Activated CD4-positive, alpha-beta memory T cell treated with anti-CD3 and anti-CD28 coated beads for 36 hours (primary cell): ENCODE measurements at regions of chr12 and their contacts with region 1.

Region 1: DNA sequence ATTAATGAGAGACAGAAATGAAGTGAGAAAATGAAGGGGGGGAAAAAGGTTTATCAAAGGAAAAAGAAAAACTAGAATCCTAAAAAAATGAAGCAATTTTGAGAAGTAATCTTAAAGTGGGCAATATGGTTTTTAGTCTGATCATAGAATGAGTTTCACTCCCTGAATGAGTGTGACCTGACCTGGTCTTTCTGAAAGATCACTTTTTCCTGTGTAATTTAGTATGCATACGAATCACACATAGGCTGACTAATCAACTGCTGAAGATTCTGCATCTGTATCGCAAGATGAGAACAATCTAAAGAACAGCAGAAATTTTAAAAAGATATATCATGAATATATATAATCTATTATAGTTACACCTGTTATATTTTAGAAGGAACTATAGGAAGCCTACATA is 11.3 kb downstream of the GNPTAB start:
- DNase-seq: no peak
- H3K4me3 Mint-ChIP-seq: no peak overlapping the region
- H3K27ac Mint-ChIP-seq: peak overlapping the region; percentile 82
- H3K4me1 Mint-ChIP-seq: peaks cover 44% of the 10 kb centered on the region
- H3K27me3 Mint-ChIP-seq: no peaks in the 10 kb centered on the region

Region 2: DNA sequence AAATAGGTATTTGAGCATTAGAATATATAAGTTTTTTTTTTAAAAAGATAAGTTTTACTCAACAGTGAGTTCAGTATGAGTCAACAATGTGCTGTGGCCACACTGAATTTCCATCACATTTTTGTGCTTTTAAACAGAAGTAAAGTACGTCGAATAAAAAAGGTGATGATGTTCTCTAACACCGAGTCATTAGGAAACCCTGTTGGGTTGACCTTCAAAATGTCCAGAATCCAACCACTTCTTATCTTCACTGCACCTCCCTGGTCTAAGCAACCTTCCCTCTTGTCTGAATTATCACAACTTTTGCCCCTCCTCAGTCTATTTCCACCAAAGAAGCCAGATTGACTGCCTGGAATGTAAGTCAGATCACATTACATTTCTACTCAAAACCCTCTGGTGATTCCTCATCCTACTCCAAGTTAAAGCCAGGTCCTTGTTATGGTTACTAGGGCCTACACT is 37.2 kb before region 1 on chr12:
- CTCF ChIA-PET with region 1: interaction called, 4 read pairs
- POLR2A ChIA-PET with region 1: interaction called, 5 read pairs
- intact Hi-C with region 1: loop called (anchors 1 kb)
- DNase-seq: peak; percentile 22
- H3K4me3 Mint-ChIP-seq: no peak overlapping the region
- H3K27ac Mint-ChIP-seq: peak overlapping the region; percentile 18
- H3K4me1 Mint-ChIP-seq: peaks cover 22% of the 10 kb centered on the region
- H3K27me3 Mint-ChIP-seq: no peaks in the 10 kb centered on the region

Region 3: DNA sequence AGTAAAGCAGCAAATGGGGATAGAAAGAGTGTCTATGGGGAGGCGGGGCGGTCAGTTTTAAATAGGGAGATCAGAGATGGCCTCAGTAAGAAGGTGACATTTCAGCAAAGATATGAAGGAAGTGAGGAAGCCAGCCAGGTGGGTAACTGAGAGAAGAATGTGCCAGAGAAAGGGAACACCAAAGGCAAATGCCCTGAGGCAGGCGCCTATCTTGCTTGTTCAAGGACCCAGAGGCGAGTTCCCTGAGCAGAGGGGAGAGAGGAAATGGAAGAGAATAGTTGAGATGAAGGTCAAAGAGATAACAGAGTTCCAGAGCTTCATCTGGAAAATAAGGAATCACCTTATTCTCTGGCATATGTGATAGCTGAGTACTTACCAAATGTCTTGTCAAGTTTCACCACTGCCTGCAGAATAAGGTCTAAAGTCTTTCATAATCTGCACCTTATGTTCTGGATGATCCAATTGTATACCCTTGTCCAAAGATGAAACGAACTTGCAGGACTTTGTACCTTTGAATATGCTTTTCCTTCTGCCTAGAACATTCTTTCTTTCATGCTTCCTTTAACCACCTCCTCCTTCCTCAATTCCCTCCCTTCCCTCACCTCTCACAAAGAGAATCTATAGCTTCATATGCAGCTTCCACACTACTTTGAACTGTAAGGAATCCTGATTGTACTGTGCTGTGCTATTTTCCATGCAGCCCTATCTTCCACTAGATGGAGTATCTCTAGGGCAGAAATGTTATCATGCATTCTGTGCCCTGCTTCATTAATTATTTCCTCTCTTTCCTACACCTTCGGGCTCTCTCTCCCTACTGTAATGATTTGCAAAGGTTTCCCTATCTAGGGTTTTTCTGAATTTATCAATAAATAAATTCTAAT is 27.2 kb before region 1 on chr12:
- CTCF ChIA-PET with region 1: interaction called, 4 read pairs
- POLR2A ChIA-PET with region 1: interaction called, 3 read pairs
- intact Hi-C with region 1: loop called (anchors 1 kb)
- DNase-seq: no peak
- H3K4me3 Mint-ChIP-seq: no peak overlapping the region
- H3K27ac Mint-ChIP-seq: no peak overlapping the region
- H3K4me1 Mint-ChIP-seq: peaks cover 17% of the 10 kb centered on the region
- H3K27me3 Mint-ChIP-seq: no peaks in the 10 kb centered on the region

Region 4: DNA sequence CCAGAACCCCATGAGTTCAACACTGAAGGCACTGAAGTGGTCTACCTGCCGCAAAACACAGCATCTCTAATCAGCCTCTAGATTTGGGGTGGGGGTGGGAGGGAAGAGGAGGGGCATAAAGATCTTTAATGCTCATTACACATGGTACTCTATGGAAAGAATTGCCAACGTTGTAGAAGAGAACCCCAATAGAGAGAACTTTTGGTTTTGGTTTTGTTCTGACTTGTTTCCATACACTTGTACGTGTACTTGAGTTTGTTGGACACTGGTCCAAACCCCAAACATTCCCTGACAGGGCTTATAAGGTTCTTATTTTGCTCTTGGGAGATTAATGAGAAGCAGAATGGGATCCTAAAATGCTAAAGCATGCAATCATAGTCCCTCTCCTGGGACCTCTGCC is 19.7 kb before region 1 on chr12:
- CTCF ChIA-PET with region 1: interaction called, 3 read pairs
- POLR2A ChIA-PET with region 1: interaction called, 3 read pairs
- intact Hi-C with region 1: loop called (anchors 1 kb)
- DNase-seq: no peak
- H3K4me3 Mint-ChIP-seq: no peak overlapping the region
- H3K27ac Mint-ChIP-seq: no peak overlapping the region
- H3K4me1 Mint-ChIP-seq: peaks cover 15% of the 10 kb centered on the region
- H3K27me3 Mint-ChIP-seq: no peaks in the 10 kb centered on the region

Region 5: DNA sequence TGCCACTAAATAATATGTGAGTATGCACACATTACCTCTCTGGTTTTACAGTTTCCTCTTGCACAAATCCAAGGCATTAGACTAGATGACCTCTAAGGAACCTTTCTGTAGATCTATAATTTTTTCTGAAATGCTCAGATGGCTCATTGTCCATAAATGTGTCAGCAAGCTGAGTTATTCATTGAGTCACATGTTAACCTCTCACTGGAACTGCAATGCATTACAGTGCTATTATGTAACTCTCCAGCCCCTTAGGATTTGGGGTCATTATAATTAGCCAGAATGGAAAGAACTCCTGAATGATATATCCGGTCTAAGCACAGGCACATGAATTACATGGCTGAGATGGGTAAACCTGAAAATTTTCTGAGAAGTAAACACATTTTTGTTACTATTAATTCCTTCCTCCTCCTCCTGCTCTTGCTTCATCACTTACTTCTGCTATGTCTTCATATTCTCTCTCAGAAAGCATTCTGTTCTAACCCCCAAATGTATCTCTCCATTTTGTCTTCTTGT is 37.6 kb after region 1 on chr12:
- CTCF ChIA-PET with region 1: no interaction called
- POLR2A ChIA-PET with region 1: no interaction called
- intact Hi-C with region 1: loop called (anchors 1 kb)
- DNase-seq: no peak
- H3K4me3 Mint-ChIP-seq: no peak overlapping the region
- H3K27ac Mint-ChIP-seq: no peak overlapping the region
- H3K4me1 Mint-ChIP-seq: peaks cover 23% of the 10 kb centered on the region
- H3K27me3 Mint-ChIP-seq: no peaks in the 10 kb centered on the region

Region 6: DNA sequence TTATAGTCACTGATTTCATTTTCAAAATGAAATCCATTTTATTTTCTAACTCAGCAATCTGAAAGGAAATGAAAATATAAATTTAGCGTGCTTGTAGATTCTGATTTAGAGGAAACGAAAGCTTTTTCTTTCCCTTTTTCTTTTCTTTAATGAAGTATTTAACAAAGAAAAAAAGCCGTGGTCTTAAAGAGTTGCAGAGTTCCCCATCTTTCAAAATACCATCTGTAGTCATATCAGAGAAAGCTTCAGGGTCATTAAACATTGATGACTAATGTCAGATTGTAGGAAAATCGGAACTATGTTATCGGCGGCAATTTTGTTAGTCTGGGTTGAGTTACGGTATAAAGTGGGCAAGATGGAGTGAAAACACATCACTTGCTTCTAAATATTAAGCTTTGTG is 90.2 kb after region 1 on chr12:
- CTCF ChIA-PET with region 1: no interaction called
- POLR2A ChIA-PET with region 1: no interaction called
- intact Hi-C with region 1: no loop called
- DNase-seq: no peak
- H3K4me3 Mint-ChIP-seq: no peak overlapping the region
- H3K27ac Mint-ChIP-seq: no peak overlapping the region
- H3K4me1 Mint-ChIP-seq: no peaks in the 10 kb centered on the region
- H3K27me3 Mint-ChIP-seq: no peaks in the 10 kb centered on the region